ENCODE measurements at regions of chr17 and their contacts with region 1.

Region 1: GRCh38 chr17:40323391-40324381 is 14.7 kb downstream of the RARA start:
- DNase-seq: peak; percentile 72
- ATAC-seq: peak; percentile 40
- H3K4me3 Mint-ChIP-seq: peak overlapping the region; percentile 93
- H3K27ac Mint-ChIP-seq: peak overlapping the region; percentile 98
- H3K4me1 Mint-ChIP-seq: peaks cover 98% of the 10 kb centered on the region
- H3K27me3 Mint-ChIP-seq: no peaks in the 10 kb centered on the region
- CTCF ChIP-seq: no peak

Region 2: GRCh38 chr17:40303009-40303657 is 20.6 kb before region 1 on chr17:
- CTCF ChIA-PET with region 1: interaction called, 19 read pairs
- POLR2A ChIA-PET with region 1: interaction called, 9 read pairs
- intact Hi-C with region 1: loop called (anchors 2 kb)
- DNase-seq: no peak
- ATAC-seq: peak; percentile 83
- H3K4me3 Mint-ChIP-seq: no peak overlapping the region
- H3K27ac Mint-ChIP-seq: no peak overlapping the region
- H3K4me1 Mint-ChIP-seq: peaks cover 7% of the 10 kb centered on the region
- H3K27me3 Mint-ChIP-seq: no peaks in the 10 kb centered on the region
- CTCF ChIP-seq: no peak

Region 3: GRCh38 chr17:40340880-40341807 is 17.5 kb after region 1 on chr17:
- CTCF ChIA-PET with region 1: interaction called, 8 read pairs
- POLR2A ChIA-PET with region 1: interaction called, 96 read pairs
- intact Hi-C with region 1: loop called (anchors 1 kb)
- DNase-seq: peak; percentile 82
- ATAC-seq: peak; percentile 83
- H3K4me3 Mint-ChIP-seq: peak overlapping the region; percentile 85
- H3K27ac Mint-ChIP-seq: peak overlapping the region; percentile 81
- H3K4me1 Mint-ChIP-seq: peaks cover 77% of the 10 kb centered on the region
- H3K27me3 Mint-ChIP-seq: no peaks in the 10 kb centered on the region
- CTCF ChIP-seq: no peak

Region 4: GRCh38 chr17:40349920-40350909 is 26.5 kb after region 1 on chr17:
- CTCF ChIA-PET with region 1: interaction called, 53 read pairs
- POLR2A ChIA-PET with region 1: interaction called, 96 read pairs
- intact Hi-C with region 1: no loop called
- DNase-seq: no peak
- ATAC-seq: no peak
- H3K4me3 Mint-ChIP-seq: no peak overlapping the region
- H3K27ac Mint-ChIP-seq: peak overlapping the region; percentile 6
- H3K4me1 Mint-ChIP-seq: peaks cover 75% of the 10 kb centered on the region
- H3K27me3 Mint-ChIP-seq: no peaks in the 10 kb centered on the region
- CTCF ChIP-seq: no peak

Region 5: DNA sequence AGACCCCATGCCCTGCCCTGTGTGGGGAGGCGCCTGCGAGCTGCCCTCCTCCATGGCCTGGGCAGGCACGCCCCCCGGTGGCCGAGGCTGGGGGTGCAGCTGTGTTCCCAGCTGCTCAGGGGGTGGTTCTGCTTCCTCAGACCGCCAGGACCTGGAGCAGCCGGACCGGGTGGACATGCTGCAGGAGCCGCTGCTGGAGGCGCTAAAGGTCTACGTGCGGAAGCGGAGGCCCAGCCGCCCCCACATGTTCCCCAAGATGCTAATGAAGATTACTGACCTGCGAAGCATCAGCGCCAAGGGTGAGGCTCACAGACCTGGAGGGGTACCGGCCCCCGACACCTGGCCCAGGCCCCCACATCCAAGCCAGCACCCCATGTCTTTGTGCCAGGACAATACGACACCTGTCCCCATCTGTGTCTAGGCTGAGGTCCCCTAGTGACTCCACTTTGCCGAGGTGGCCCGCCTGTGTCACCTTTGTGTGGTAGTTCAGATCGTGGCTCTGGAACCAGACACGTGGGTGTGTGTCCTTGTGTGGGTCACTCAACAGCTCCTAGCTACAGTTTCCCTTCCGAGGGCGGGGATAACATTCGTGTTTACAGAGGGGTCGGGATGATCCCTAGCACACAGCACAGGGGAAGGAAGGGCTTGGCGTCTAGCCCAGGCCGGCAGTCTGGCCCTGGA is 31.6 kb after region 1 on chr17:
- CTCF ChIA-PET with region 1: interaction called, 53 read pairs
- POLR2A ChIA-PET with region 1: interaction called, 32 read pairs
- intact Hi-C with region 1: no loop called
- DNase-seq: peak; percentile 86
- ATAC-seq: peak; percentile 78
- H3K4me3 Mint-ChIP-seq: no peak overlapping the region
- H3K27ac Mint-ChIP-seq: peak overlapping the region; percentile 59
- H3K4me1 Mint-ChIP-seq: peaks cover 44% of the 10 kb centered on the region
- H3K27me3 Mint-ChIP-seq: no peaks in the 10 kb centered on the region
- CTCF ChIP-seq: peak; percentile 53

Region 6: DNA sequence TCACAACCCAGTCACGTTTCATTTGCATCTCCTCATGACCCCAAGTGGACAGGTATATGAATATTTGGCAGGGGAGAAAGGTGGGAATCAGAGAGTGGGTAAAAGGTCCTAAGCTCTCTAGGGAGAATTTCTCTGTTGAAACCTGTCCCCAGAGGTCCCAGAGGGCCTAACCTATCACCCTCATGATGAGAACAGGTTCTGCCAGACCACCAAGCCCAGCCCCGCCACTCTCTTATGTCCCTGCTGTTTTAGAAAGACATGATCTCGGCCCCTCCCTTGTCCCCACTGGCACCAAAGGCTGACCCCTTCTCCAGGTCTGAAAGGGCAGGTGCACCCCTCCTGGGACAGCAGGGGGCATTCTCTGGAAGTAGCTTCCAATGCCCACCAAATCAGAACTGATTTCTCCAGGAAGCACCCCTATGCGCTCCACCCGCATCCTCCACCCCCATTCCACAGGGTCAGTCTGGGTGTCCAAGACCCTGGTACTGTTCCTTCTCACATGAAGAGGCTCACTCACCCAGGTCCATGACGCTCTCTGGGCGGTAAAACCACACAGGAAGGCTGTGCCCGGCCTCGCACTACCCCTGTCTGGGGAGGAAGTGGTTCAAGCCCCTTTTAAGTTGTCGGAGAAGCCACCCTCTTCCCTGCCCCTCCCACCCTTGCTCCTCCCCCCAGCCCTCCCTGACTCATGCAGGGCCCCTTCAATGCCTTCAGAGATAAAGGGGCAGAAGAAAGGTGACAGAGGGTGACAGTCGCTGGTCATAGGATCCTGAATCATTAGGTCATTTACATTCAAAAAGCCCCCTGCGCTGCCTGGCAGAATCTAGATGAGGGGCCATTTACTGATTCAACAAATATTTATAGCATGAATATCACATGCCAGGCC is 241.4 kb after region 1 on chr17 and contains the start of gene CCR7:
- CTCF ChIA-PET with region 1: no interaction called
- POLR2A ChIA-PET with region 1: interaction called, 13 read pairs
- intact Hi-C with region 1: no loop called
- DNase-seq: peak; percentile 78
- ATAC-seq: peak; percentile 66
- H3K4me3 Mint-ChIP-seq: peak within 1 kb of the TSS; percentile 89
- H3K27ac Mint-ChIP-seq: peak within 1 kb of the TSS; percentile 99
- H3K4me1 Mint-ChIP-seq: peaks cover 74% of the 10 kb centered on the region
- H3K27me3 Mint-ChIP-seq: no peaks in the 10 kb centered on the region
- CTCF ChIP-seq: no peak
- total RNA-seq, gene CCR7: 572 and 573 TPM in 2 replicates